H1 (cell line): ENCODE measurements at regions of chr1 and their contacts with region 1.

Region 1: DNA sequence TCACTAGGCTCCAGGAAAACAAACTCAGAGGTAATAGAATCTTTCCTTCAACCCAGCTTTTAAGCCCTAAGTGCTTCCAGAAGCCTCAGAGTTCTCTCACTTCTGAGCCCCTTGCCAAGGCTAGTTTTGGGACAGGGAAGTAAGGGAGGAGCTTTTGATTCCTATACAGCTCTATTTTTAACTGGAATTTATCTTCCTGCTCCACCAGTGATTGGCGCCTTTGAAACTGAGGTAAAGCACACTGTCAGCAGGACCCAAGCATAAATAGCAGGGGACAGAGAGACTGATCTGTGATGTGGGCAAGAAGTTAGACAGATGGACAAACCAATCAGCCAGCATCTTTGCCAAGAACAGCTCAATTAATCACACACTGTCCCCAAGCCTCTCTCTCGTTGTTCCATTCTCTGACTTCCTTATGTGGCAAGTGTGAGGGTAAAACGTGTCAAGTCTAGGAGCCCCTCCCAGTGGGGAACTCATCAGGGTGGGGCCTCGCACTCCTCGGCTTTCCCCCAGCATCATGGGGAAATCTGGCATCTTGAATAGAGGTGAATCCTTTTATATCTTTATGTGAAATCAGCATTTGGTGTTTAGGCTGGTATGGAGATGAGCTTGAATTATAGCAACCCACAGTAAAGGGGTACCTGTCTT is 40.2 kb upstream of the MPZL1 start:
- DNase-seq: no peak
- H3K4me3 ChIP-seq: no peak overlapping the region
- H3K27ac ChIP-seq: no peak overlapping the region
- H3K4me1 ChIP-seq: peaks cover 2 to 8% (median 6%) of the 10 kb centered on the region in 4 experiments; a peak in 6 of 7 replicates
- H3K27me3 ChIP-seq: no peaks in the 10 kb centered on the region; a peak in 1 of 7 replicates
- CTCF ChIP-seq: no peak
- EP300 ChIP-seq: no peak
- POLR2A ChIP-seq: no peak
- RAD21 ChIP-seq: no peak

Region 2: GRCh38 chr1:167650269-167651160 is 31.1 kb before region 1 on chr1:
- CTCF ChIA-PET with region 1: no interaction called
- POLR2A ChIA-PET with region 1: no interaction called
- DNase-seq: no peak
- H3K4me3 ChIP-seq: no peak overlapping the region
- H3K27ac ChIP-seq: no peak overlapping the region
- H3K4me1 ChIP-seq: 0 out of 7 replicates have a peak, but pooled peaks cover 0 to 4% (median 0%) of the 10 kb centered on the region in 4 experiments
- H3K27me3 ChIP-seq: no peaks in the 10 kb centered on the region
- CTCF ChIP-seq: no peak
- EP300 ChIP-seq: no peak
- POLR2A ChIP-seq: no peak
- RAD21 ChIP-seq: no peak

Region 3: GRCh38 chr1:167669209-167670124 is 12.1 kb before region 1 on chr1:
- CTCF ChIA-PET with region 1: interaction called, 30 read pairs
- POLR2A ChIA-PET with region 1: no interaction called
- DNase-seq: no peak
- H3K4me3 ChIP-seq: no peak overlapping the region
- H3K27ac ChIP-seq: no peak overlapping the region
- H3K4me1 ChIP-seq: peaks cover 0 to 4% (median 0%) of the 10 kb centered on the region in 4 experiments; a peak in 1 of 7 replicates
- H3K27me3 ChIP-seq: no peaks in the 10 kb centered on the region
- CTCF ChIP-seq: peak in 1 of 3 experiments; percentile 2; a peak in 1 of 4 replicates
- EP300 ChIP-seq: no peak
- POLR2A ChIP-seq: no peak
- RAD21 ChIP-seq: no peak